Activated CD4-positive, alpha-beta memory T cell treated with anti-CD3 and anti-CD28 coated beads for 36 hours (primary cell): ENCODE measurements at regions of chr2 and their contacts with region 1.

Region 1: DNA sequence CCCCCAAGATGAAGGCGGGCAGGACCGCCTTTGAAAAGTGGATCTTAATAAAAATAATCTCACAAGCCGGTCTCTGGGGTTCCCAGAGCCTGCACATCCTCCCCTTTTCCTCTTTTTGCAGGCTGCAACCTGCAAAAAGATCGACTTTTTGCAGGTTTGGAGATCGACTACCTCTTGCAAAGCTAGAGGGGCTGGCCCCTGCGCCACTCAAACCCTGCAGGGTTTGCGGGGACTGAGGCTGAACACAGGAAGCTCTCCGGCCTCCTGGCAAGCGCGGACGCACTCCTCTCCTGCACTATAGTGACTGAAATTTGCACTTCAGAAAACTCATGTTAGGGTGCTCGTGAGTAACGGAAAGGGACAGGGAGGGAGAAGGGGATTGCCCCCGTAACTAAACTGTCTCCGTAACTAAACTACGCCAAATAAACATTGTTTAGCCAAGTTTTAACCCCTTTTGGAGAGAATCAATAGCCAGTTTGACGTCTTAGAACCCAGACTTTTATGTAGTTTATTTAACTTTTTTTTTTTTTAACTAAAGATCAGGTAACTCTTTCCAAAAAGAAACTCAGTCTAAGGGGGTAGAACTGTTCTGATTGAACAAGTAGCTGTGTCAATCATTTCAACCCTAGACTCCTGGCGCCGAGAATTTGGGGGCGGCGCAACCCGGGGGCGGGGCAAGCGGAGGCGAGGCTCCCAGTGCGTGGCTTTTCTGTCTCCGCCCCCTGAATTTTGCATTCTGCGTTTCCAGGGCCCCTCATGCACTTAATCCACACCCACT is 2.5 kb downstream of the IGFBP5 start:
- DNase-seq: peak; percentile 69
- H3K4me3 Mint-ChIP-seq: peak overlapping the region; percentile 63
- H3K27ac Mint-ChIP-seq: no peak overlapping the region
- H3K4me1 Mint-ChIP-seq: peaks cover 25% of the 10 kb centered on the region
- H3K27me3 Mint-ChIP-seq: peaks cover 56% of the 10 kb centered on the region

Region 2: GRCh38 chr2:216680951-216681629 is 11.7 kb before region 1 on chr2:
- CTCF ChIA-PET with region 1: interaction called, 10 read pairs
- POLR2A ChIA-PET with region 1: no interaction called
- intact Hi-C with region 1: no loop called
- DNase-seq: no peak
- H3K4me3 Mint-ChIP-seq: no peak overlapping the region
- H3K27ac Mint-ChIP-seq: no peak overlapping the region
- H3K4me1 Mint-ChIP-seq: no peaks in the 10 kb centered on the region
- H3K27me3 Mint-ChIP-seq: peaks cover 23% of the 10 kb centered on the region

Region 3: GRCh38 chr2:217510771-217511291 is 818.0 kb after region 1 on chr2:
- CTCF ChIA-PET with region 1: interaction called, 10 read pairs
- POLR2A ChIA-PET with region 1: no interaction called
- intact Hi-C with region 1: loop called (anchors 2 kb)
- DNase-seq: peak; percentile 44
- H3K4me3 Mint-ChIP-seq: no peak overlapping the region
- H3K27ac Mint-ChIP-seq: no peak overlapping the region
- H3K4me1 Mint-ChIP-seq: peaks cover 5% of the 10 kb centered on the region
- H3K27me3 Mint-ChIP-seq: no peaks in the 10 kb centered on the region

Region 4: DNA sequence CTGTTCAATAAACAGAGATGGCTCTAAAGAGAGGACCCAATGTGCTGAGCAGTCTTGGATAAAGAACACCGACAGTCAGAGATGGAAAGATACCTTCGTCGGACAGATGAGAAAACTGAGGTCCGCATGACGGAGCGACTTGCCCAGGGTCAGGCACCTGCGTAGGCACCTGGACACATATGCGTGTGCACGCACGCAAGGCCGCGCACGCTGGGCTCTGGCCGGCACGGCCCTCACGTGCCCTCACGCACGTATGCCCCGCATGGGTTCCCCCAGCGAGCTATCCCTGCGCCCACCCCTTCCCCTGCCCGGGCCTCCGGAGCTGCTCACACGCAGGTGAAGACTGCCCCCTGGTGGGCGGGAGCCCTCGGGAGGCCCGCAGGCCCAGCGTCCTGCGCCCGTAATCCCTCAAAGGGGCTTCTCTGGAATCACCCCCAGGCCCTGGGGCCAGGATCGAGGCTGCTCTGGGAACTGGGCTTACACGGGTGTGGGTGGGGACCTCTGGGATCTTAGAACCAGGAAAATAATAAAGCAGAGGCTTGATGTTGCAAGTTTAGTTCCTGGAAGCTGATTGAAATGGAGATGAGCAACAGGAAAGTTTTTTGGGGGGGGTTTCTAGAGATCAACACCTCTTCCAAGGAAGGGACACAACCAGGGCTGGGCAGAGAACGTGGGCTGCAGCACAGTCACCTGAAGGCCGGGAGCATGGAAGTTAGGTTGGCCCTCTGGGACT is 1063.7 kb after region 1 on chr2:
- CTCF ChIA-PET with region 1: no interaction called
- POLR2A ChIA-PET with region 1: no interaction called
- intact Hi-C with region 1: loop called (anchors 5 kb)
- DNase-seq: peak; percentile 77
- H3K4me3 Mint-ChIP-seq: peak overlapping the region; percentile 42
- H3K27ac Mint-ChIP-seq: no peak overlapping the region
- H3K4me1 Mint-ChIP-seq: peaks cover 21% of the 10 kb centered on the region
- H3K27me3 Mint-ChIP-seq: no peaks in the 10 kb centered on the region